K562 (cell line): ENCODE measurements at regions of chr9 and their contacts with region 1.

Region 1: GRCh38 chr9:112921549-112921948 is 30.9 kb upstream of the SLC46A2 start:
- DNase-seq: peak in 3 of 4 experiments; percentile 11 to 40 (median 21)
- ATAC-seq: peak; percentile 85
- H3K4me3 ChIP-seq: no peak overlapping the region
- H3K27ac ChIP-seq: no peak overlapping the region
- H3K4me1 ChIP-seq: no peaks in the 10 kb centered on the region; a peak in 1 of 5 replicates
- H3K27me3 ChIP-seq: no peaks in the 10 kb centered on the region
- CTCF ChIP-seq: peak; percentile 65 to 76 (median 71)
- EP300 ChIP-seq: no peak
- POLR2A ChIP-seq: no peak
- RAD21 ChIP-seq: peak; percentile 72 to 78

Region 2: DNA sequence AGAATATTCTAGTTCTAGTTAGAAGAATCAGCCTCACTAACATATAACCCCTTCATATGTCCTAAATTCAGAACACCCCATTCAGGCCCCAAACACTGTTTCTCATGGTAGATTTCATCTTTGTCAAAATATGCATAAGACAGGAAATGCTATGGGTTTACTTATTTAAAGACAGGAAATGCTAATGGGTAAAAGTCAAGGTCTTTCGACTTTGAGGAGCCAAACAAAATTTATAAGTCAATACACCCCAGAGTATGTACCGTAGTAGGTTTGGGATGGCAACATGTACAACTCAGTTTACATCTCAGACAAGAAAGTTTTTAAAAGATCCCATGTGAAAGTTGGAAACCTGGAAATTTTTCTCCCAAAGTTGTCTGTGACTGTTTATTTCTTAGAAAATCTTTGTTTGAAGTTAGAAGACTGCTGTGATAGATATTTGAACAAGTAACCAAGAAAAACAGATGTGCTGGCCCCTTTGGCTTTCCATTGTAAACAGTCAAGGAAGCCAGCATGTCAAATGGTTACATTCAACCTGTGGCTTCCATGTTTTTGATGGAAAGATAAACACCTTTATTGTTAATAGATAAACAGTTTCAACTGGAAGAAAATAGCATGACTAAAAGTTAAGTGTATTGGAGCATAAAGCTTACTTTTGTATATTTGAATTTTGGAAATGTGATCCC is 305.8 kb before region 1 on chr9:
- CTCF ChIA-PET with region 1: no interaction called
- POLR2A ChIA-PET with region 1: no interaction called
- in situ Hi-C with region 1: no loop called
- intact Hi-C with region 1: no loop called
- DNase-seq: no peak
- ATAC-seq: no peak
- H3K4me3 ChIP-seq: no peak overlapping the region
- H3K27ac ChIP-seq: no peak overlapping the region
- H3K4me1 ChIP-seq: no peaks in the 10 kb centered on the region; a peak in 2 of 5 replicates
- H3K27me3 ChIP-seq: no peaks in the 10 kb centered on the region
- CTCF ChIP-seq: no peak
- EP300 ChIP-seq: no peak
- POLR2A ChIP-seq: no peak
- RAD21 ChIP-seq: no peak

Region 3: DNA sequence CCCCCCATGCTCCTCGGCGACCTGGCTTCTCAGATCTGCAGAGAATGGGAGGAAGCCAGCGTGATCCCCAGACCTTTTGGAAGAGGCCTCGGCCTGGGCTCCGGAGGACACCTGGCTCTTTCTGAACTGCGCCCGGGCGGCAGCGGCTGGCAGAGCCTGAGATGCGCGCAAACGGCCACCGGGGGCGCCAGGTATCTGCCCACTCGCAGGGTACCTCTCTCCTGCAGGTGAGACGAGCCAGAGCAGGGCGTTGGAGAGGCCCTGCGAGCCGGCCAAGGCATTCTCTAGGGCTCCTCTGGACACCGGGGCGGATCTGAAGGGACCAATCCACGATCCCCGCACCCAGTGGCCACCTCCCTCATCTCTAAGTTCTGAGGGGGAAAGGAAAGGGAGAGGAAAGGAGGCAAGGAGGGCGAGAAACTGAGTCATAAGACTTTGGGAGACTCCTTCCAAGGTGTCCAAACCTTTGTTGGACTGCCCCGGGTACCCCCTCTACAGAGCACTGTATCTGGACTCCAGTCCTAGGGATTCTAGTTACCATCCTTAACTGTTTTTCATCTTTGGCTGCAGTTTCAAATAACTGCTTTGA is 24.2 kb after region 1 on chr9:
- CTCF ChIA-PET with region 1: no interaction called
- POLR2A ChIA-PET with region 1: no interaction called
- in situ Hi-C with region 1: no loop called
- intact Hi-C with region 1: no loop called
- DNase-seq: peak; percentile 11 to 21 (median 16)
- ATAC-seq: peak; percentile 93
- H3K4me3 ChIP-seq: no peak overlapping the region
- H3K27ac ChIP-seq: no peak overlapping the region
- H3K4me1 ChIP-seq: peaks cover 0 to 4% of the 10 kb centered on the region in 2 experiments; a peak in 1 of 5 replicates
- H3K27me3 ChIP-seq: peaks cover 0 to 3% of the 10 kb centered on the region in 2 experiments; a peak in 2 of 5 replicates
- CTCF ChIP-seq: peak; percentile 31 to 65 (median 43); a peak in 5 of 6 replicates
- EP300 ChIP-seq: no peak
- POLR2A ChIP-seq: no peak
- RAD21 ChIP-seq: no peak

Region 4: GRCh38 chr9:113095561-113095960 is 174.0 kb after region 1 on chr9:
- CTCF ChIA-PET with region 1: no interaction called
- POLR2A ChIA-PET with region 1: no interaction called
- in situ Hi-C with region 1: no loop called
- intact Hi-C with region 1: loop called (anchors 10 kb)
- DNase-seq: no peak
- ATAC-seq: no peak
- H3K4me3 ChIP-seq: no peak overlapping the region
- H3K27ac ChIP-seq: no peak overlapping the region
- H3K4me1 ChIP-seq: no peaks in the 10 kb centered on the region
- H3K27me3 ChIP-seq: peaks cover 0 to 5% of the 10 kb centered on the region in 2 experiments; a peak in 1 of 5 replicates
- CTCF ChIP-seq: no peak
- EP300 ChIP-seq: no peak
- POLR2A ChIP-seq: no peak
- RAD21 ChIP-seq: no peak

Region 5: GRCh38 chr9:113410207-113410864 is 488.8 kb after region 1 on chr9 and contains the starts of genes C9orf43 and POLE3:
- CTCF ChIA-PET with region 1: no interaction called
- POLR2A ChIA-PET with region 1: no interaction called
- in situ Hi-C with region 1: no loop called
- intact Hi-C with region 1: no loop called
- DNase-seq: peak; percentile 92 to 98 (median 94)
- ATAC-seq: peak; percentile 94
- H3K4me3 ChIP-seq: peak within 1 kb of the TSS; percentile 88
- H3K27ac ChIP-seq: peak within 1 kb of the TSS; percentile 87
- H3K4me1 ChIP-seq: peaks cover 12 to 22% of the 10 kb centered on the region in 2 experiments; a peak in 4 of 5 replicates
- H3K27me3 ChIP-seq: no peaks in the 10 kb centered on the region
- CTCF ChIP-seq: peak in 1 of 3 experiments; percentile 32; a peak in 1 of 6 replicates
- EP300 ChIP-seq: peak; percentile 52
- POLR2A ChIP-seq: peak; percentile 85
- RAD21 ChIP-seq: peak in 1 of 2 experiments; percentile 17; a peak in 1 of 4 replicates
- polyA plus RNA-seq, gene C9orf43: 0.21 to 0.31 TPM
- polyA plus RNA-seq, gene POLE3: 52.6 to 110 TPM